Gastrocnemius medialis (tissue), 4 donors: ENCODE measurements at regions of chr12 and their contacts with region 1.

Region 1: DNA sequence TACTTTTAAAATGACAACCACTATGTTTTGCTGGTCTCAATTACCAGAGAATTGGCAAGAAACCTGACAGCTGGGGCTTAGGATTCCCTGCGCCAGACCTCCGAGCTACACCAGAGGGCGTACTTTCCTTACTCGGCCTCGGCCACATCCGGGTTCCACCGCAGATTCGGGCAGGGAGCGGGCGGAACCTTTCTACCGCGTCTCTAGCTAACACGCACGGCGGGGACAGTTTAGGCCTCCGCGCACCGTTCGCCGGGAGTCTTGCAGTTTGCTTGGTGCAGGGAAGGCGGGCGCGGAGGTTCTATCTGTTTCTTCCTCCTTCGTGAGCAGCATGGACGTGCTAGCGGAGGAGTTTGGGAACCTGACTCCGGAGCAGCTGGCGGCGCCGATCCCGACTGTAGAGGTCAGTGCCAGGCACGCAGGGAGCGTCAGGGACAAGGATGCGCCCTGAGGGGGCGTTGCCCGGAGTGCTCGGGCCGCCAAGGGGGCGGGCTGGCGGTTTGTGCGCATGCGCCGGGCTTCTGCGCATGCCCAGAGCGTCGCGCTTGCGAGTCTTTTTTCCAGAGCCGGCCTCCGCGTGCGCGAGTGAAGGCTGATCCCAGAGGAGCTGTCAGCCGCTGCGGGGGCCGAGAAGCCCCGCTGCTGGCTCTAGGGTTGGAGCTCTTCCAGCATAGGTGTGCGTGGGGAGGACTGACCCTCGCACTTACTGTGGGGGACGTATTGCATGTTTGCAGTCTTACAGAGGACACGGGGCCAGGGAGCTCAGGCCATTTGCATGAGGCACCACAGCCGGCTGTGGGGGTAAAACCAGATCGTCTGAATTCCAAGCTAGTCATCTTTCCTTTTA is at the start of gene POLR3B:
- DNase-seq: peak; percentile 93 to 94
- ATAC-seq: peak; percentile 85 to 90
- H3K4me3 ChIP-seq: peak within 1 kb of the TSS; percentile 68 to 84 (median 80)
- H3K27ac ChIP-seq: peak within 1 kb of the TSS; percentile 87 to 96 (median 91)
- H3K4me1 ChIP-seq: peaks cover 16 to 18% of the 10 kb centered on the region in 2 donors
- H3K27me3 ChIP-seq: no peaks in the 10 kb centered on the region
- CTCF ChIP-seq: peak; percentile 85 to 93 (median 88)
- POLR2A ChIP-seq: peak; percentile 91 to 92
- total RNA-seq, gene POLR3B: 4.2 to 9.5 (median 6.4) TPM

Region 2: GRCh38 chr12:105409801-105410471 is 947.8 kb before region 1 on chr12:
- in situ Hi-C with region 1: no loop called
- intact Hi-C with region 1: loop called (anchors 10 kb)
- DNase-seq: no peak
- ATAC-seq: peak; percentile 39 to 63
- H3K4me3 ChIP-seq: no peak overlapping the region
- H3K27ac ChIP-seq: peak overlapping the region in 1 of 4 donors; percentile 27
- H3K4me1 ChIP-seq: peaks cover 6% of the 10 kb centered on the region in 2 donors
- H3K27me3 ChIP-seq: no peaks in the 10 kb centered on the region
- CTCF ChIP-seq: no peak
- POLR2A ChIP-seq: no peak

Region 3: DNA sequence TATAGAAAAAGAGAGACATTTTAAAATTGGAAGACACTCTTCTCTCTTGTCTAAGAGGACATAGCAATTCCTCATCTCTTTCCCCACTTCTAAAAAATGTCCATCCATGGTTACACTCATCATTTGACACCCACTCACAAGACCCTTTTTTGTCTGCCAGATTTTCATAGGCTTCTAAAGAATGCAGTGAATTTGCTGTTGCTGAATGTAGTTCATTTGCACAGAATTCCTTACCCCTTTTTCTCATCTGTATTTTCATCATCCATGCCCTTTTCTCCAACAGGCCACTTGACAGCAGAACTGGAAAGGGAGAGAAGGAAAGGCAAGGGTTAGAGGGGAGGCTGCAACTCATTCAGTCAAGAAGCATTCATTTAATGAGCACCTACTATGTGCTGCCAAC is 347.0 kb before region 1 on chr12:
- in situ Hi-C with region 1: no loop called
- intact Hi-C with region 1: no loop called
- DNase-seq: no peak
- ATAC-seq: no peak
- H3K4me3 ChIP-seq: no peak overlapping the region
- H3K27ac ChIP-seq: no peak overlapping the region
- H3K4me1 ChIP-seq: no peaks in the 10 kb centered on the region
- H3K27me3 ChIP-seq: no peaks in the 10 kb centered on the region
- CTCF ChIP-seq: no peak
- POLR2A ChIP-seq: no peak

Region 4: GRCh38 chr12:106223485-106224354 is 134.1 kb before region 1 on chr12:
- in situ Hi-C with region 1: loop called in 1 of 4 experiments (anchors 10 kb)
- intact Hi-C with region 1: no loop called
- DNase-seq: peak; percentile 45 to 65
- ATAC-seq: peak; percentile 57 to 75
- H3K4me3 ChIP-seq: no peak overlapping the region
- H3K27ac ChIP-seq: no peak overlapping the region
- H3K4me1 ChIP-seq: peaks cover 8 to 17% of the 10 kb centered on the region in 2 donors
- H3K27me3 ChIP-seq: no peaks in the 10 kb centered on the region
- CTCF ChIP-seq: peak; percentile 82 to 97 (median 91)
- POLR2A ChIP-seq: no peak

Region 5: GRCh38 chr12:106296193-106296877 is 61.4 kb before region 1 on chr12:
- in situ Hi-C with region 1: loop called in 2 of 4 experiments (anchors 5 to 10 kb)
- intact Hi-C with region 1: loop called (anchors 5 kb)
- DNase-seq: peak in 1 of 2 donors; percentile 31
- ATAC-seq: peak; percentile 62 to 84
- H3K4me3 ChIP-seq: no peak overlapping the region
- H3K27ac ChIP-seq: peak overlapping the region in 2 of 4 donors; percentile 23 to 40
- H3K4me1 ChIP-seq: peaks cover 22 to 24% of the 10 kb centered on the region in 2 donors
- H3K27me3 ChIP-seq: no peaks in the 10 kb centered on the region
- CTCF ChIP-seq: no peak
- POLR2A ChIP-seq: no peak

Region 6: GRCh38 chr12:106774005-106774807 is 416.4 kb after region 1 on chr12 and contains the start of gene RIC8B:
- in situ Hi-C with region 1: no loop called
- intact Hi-C with region 1: loop called (anchors 2 kb)
- DNase-seq: peak; percentile 95 to 96
- ATAC-seq: peak; percentile 99
- H3K4me3 ChIP-seq: peak within 1 kb of the TSS; percentile 79 to 97 (median 86)
- H3K27ac ChIP-seq: peak within 1 kb of the TSS; percentile 94 to 95 (median 94)
- H3K4me1 ChIP-seq: peaks cover 14 to 18% of the 10 kb centered on the region in 2 donors
- H3K27me3 ChIP-seq: no peaks in the 10 kb centered on the region
- CTCF ChIP-seq: no peak
- POLR2A ChIP-seq: peak; percentile 73 to 80
- total RNA-seq, gene RIC8B: 6.1 to 16.0 (median 10.0) TPM

Region 7: DNA sequence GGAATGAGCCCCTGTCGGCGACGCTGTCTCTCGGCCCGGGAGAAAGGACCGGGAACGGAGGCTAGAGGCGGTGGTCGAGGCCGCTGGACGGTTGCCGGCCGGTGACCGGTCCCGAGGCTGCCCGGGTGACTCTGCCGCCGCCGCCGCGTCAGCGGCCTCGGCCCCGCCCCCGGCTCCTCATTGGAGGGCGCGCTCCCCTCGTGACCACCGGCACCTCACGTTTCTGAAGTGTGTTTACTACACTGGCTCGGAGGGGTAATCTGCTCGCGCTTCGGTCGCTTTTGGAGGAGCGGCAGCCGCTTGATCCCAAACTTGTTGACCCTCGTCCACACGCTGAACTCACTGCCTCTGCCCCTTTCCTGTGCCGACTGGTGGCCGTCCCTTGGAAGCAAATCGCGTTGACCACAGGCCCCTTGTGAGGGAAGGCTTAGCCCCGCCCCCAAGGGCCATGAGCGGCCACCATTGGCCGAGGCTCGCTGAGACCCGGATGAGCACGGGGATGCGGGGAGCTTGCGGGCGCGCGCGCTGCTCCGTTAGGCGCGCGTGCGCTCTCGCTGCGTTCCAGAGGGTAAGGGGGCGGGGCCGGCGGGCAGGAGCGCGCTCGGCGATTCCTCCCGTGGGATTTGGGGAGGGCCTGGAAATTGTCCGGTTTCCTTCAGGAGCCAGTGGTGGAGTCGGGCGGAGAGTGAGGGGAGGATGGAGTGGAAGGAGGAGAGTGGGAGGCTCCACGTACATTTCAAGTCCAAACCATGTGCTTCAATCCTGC is 735.8 kb after region 1 on chr12 and contains the start of gene CRY1:
- in situ Hi-C with region 1: no loop called
- intact Hi-C with region 1: loop called (anchors 2 kb)
- DNase-seq: peak; percentile 91 to 94
- ATAC-seq: peak; percentile 93 to 94
- H3K4me3 ChIP-seq: peak within 1 kb of the TSS; percentile 92 to 99 (median 98)
- H3K27ac ChIP-seq: peak within 1 kb of the TSS; percentile 98 to 100 (median 99)
- H3K4me1 ChIP-seq: peaks cover 17 to 27% of the 10 kb centered on the region in 2 donors
- H3K27me3 ChIP-seq: no peaks in the 10 kb centered on the region
- CTCF ChIP-seq: no peak
- POLR2A ChIP-seq: peak; percentile 98 to 99
- total RNA-seq, gene CRY1: 11.1 to 22.7 (median 11.7) TPM